PC-3 (cell line): ENCODE measurements at regions of chr4 and their contacts with region 1.

Region 1: GRCh38 chr4:128287871-128288688 is 467 bp upstream of the PGRMC2 start:
- DNase-seq: peak; percentile 94
- ATAC-seq: peak; percentile 76
- H3K4me3 ChIP-seq: peak overlapping the region; percentile 89
- H3K27ac ChIP-seq: peak overlapping the region; percentile 57
- H3K4me1 ChIP-seq: peaks cover 24% of the 10 kb centered on the region
- H3K27me3 ChIP-seq: no peaks in the 10 kb centered on the region
- CTCF ChIP-seq: no peak

Region 2: DNA sequence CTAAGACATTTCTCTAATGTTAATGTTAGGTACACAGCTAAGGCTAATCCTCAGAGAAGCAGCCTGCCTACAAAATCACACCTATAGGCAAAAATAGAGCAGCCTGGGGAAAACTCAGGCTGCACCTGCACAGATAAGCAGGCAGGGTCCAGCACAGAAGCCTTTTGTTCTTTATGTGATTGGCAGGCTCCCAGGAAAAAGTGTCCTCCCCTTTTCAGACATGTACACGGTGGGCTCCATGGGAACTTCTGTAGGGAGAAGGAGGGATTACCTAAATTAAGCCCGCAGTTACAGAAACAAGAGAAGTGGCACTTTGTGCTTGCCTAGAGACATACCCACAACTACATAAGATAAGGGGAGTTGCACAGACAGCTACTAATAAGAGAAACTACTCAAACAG is 510.0 kb before region 1 on chr4:
- CTCF ChIA-PET with region 1: no interaction called
- POLR2A ChIA-PET with region 1: no interaction called
- intact Hi-C with region 1: no loop called
- DNase-seq: no peak
- ATAC-seq: no peak
- H3K4me3 ChIP-seq: no peak overlapping the region
- H3K27ac ChIP-seq: no peak overlapping the region
- H3K4me1 ChIP-seq: no peaks in the 10 kb centered on the region
- H3K27me3 ChIP-seq: no peaks in the 10 kb centered on the region
- CTCF ChIP-seq: no peak

Region 3: DNA sequence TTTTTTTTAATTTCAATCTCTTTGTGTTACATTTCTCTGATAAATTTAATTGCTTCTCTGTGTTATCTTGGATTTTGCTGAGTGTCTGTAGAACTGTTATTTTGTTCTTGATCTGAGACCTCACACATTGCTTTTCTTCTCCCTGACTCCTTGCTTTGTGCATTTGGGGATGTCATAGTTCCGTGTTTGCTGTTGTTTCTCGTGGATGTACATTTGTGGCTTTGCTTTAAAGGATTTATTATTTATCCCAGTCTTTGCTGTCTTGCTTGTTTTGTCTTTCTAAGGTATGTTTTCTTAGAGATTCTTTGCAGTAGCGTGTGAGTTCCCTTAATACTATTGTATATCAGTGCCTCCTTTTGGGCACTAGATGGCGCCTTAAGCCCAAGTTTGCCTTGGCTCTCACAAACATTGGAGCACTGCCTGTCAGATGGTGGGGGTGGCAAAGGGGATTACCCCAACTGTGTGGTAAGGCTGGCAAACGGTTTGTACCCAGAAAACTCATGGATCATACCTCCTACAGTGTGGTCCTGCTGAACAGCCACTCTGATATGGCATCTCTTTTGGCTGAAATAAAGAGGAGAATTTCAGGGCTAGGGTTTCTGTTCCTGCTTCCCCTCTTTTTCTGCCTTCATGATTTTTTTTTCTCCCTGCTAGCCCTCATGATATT is 96.8 kb before region 1 on chr4:
- CTCF ChIA-PET with region 1: no interaction called
- POLR2A ChIA-PET with region 1: no interaction called
- intact Hi-C with region 1: loop called (anchors 10 kb)
- DNase-seq: peak; percentile 71
- ATAC-seq: peak; percentile 67
- H3K4me3 ChIP-seq: no peak overlapping the region
- H3K27ac ChIP-seq: no peak overlapping the region
- H3K4me1 ChIP-seq: no peaks in the 10 kb centered on the region
- H3K27me3 ChIP-seq: no peaks in the 10 kb centered on the region
- CTCF ChIP-seq: peak; percentile 91

Region 4: DNA sequence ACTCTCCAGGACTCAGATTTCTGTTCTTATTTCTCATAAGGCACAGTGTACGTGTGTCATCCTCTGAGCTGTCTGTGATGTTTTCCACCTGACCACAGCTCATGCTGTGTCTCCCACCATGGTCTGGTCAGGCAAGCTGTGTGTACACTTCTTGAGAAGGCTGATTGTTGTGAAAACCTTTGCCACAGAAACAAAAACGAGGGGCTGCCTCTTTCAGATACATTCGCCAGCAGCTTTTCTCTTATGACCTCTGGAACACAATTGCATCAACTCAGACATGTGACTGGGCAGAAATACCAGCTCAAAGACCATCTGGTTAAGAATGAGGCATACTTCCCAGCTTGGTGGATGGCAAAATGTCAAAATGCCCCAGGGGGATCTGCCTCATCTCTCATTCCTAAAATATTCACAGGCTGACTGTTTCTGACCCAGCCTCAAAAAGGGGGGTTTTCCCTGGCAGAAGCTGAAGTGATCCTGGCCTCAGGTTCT is 46.6 kb before region 1 on chr4:
- CTCF ChIA-PET with region 1: no interaction called
- POLR2A ChIA-PET with region 1: no interaction called
- intact Hi-C with region 1: loop called (anchors 1 kb)
- DNase-seq: peak; percentile 96
- ATAC-seq: peak; percentile 79
- H3K4me3 ChIP-seq: no peak overlapping the region
- H3K27ac ChIP-seq: peak overlapping the region; percentile 72
- H3K4me1 ChIP-seq: peaks cover 21% of the 10 kb centered on the region
- H3K27me3 ChIP-seq: no peaks in the 10 kb centered on the region
- CTCF ChIP-seq: no peak

Region 5: GRCh38 chr4:128338634-128339355 is 50.7 kb after region 1 on chr4:
- CTCF ChIA-PET with region 1: no interaction called
- POLR2A ChIA-PET with region 1: no interaction called
- intact Hi-C with region 1: loop called (anchors 1 kb)
- DNase-seq: peak; percentile 76
- ATAC-seq: peak; percentile 95
- H3K4me3 ChIP-seq: no peak overlapping the region
- H3K27ac ChIP-seq: no peak overlapping the region
- H3K4me1 ChIP-seq: peaks cover 19% of the 10 kb centered on the region
- H3K27me3 ChIP-seq: no peaks in the 10 kb centered on the region
- CTCF ChIP-seq: no peak

Region 6: GRCh38 chr4:128427832-128428366 is 139.8 kb after region 1 on chr4:
- CTCF ChIA-PET with region 1: no interaction called
- POLR2A ChIA-PET with region 1: no interaction called
- intact Hi-C with region 1: loop called (anchors 1 kb)
- DNase-seq: peak; percentile 87
- ATAC-seq: peak; percentile 100
- H3K4me3 ChIP-seq: no peak overlapping the region
- H3K27ac ChIP-seq: no peak overlapping the region
- H3K4me1 ChIP-seq: peaks cover 7% of the 10 kb centered on the region
- H3K27me3 ChIP-seq: no peaks in the 10 kb centered on the region
- CTCF ChIP-seq: peak; percentile 77

Region 7: GRCh38 chr4:129037093-129037492 is 749.0 kb after region 1 on chr4:
- CTCF ChIA-PET with region 1: no interaction called
- POLR2A ChIA-PET with region 1: no interaction called
- intact Hi-C with region 1: no loop called
- DNase-seq: no peak
- ATAC-seq: no peak
- H3K4me3 ChIP-seq: no peak overlapping the region
- H3K27ac ChIP-seq: no peak overlapping the region
- H3K4me1 ChIP-seq: no peaks in the 10 kb centered on the region
- H3K27me3 ChIP-seq: no peaks in the 10 kb centered on the region
- CTCF ChIP-seq: no peak